ENCODE measurements at regions of chr6 and their contacts with region 1.

Region 1: DNA sequence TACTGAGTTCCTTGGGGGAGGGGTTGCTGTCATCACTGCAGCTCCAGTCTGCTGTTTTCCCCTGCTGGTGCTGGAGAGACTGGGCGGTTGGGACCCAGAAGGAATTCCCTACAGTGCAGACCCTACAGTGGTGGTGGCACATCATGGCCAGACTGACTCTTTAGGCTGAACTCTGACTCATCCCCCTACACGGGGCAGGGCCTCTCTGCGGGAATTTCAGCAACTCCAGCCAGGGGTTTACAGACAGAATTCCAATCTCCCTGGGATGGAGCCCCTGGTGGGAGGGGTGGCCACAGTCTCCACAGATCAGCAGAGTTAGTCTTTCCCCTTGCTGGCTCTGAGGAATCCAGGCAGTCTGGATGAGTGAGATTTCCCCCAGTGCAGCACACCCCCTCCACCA is 46.9 kb upstream of the MAPK13 start:
- DNase-seq: no peak
- H3K4me3 ChIP-seq: no peak overlapping the region
- H3K27ac ChIP-seq: no peak overlapping the region
- H3K4me1 ChIP-seq: no peaks in the 10 kb centered on the region
- H3K27me3 ChIP-seq: no peaks in the 10 kb centered on the region
- CTCF ChIP-seq: no peak
- EP300 ChIP-seq: no peak
- POLR2A ChIP-seq: no peak
- RAD21 ChIP-seq: no peak

Region 2: DNA sequence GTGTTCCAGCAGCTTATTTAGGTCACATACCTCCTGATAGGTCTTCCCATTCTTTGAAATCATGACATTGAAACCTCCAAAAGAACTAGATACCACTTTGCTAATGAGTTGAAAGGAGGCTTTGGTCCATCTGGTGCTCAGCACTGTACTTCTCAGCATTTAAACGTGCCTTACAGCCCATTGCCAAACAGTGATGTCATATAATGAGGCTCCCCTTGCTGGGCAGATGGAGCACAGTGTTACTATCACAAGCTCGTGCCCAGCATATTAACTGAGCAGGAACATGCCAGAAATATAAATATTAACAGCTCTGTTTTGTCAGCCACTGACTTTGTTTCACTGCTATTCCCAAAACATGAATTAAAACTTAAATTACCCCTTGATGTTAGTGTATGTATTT is 21.4 kb after region 1 on chr6:
- CTCF ChIA-PET with region 1: interaction called, 13 read pairs
- POLR2A ChIA-PET with region 1: no interaction called
- DNase-seq: no peak
- H3K4me3 ChIP-seq: no peak overlapping the region
- H3K27ac ChIP-seq: no peak overlapping the region
- H3K4me1 ChIP-seq: no peaks in the 10 kb centered on the region
- H3K27me3 ChIP-seq: no peaks in the 10 kb centered on the region
- CTCF ChIP-seq: no peak
- EP300 ChIP-seq: no peak
- POLR2A ChIP-seq: no peak
- RAD21 ChIP-seq: no peak

Region 3: DNA sequence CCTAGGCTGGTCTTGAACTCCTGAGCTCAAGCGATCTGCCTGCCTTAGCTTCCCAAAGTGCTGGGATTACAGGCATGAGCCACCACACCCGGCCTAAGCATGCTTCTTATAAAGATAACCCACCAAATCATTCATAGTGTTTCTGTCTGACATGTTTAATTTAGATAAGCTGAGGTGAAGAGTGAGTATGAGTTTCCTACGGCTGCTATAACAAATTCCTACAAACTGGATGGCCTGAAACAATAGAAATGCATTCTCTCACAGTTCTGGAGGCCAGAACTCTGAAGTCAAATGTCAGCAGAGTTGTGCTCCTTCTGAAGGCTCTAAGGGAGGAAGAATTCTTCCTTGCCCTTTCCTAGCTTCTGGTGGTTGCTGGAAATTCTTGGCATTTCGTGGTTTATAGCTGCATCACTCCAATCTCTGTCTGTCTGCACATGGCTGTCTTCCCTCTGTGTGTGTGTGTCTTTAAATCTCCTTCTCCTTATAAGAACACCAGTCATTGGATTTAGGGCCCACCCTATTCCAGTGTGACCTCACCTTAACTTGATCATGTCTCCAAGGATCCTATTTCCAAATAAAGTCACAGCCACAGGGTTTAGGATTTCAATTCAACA is 76.8 kb after region 1 on chr6:
- CTCF ChIA-PET with region 1: no interaction called
- POLR2A ChIA-PET with region 1: no interaction called
- DNase-seq: no peak
- H3K4me3 ChIP-seq: no peak overlapping the region
- H3K27ac ChIP-seq: no peak overlapping the region
- H3K4me1 ChIP-seq: no peaks in the 10 kb centered on the region
- H3K27me3 ChIP-seq: no peaks in the 10 kb centered on the region
- CTCF ChIP-seq: no peak
- EP300 ChIP-seq: no peak
- POLR2A ChIP-seq: no peak
- RAD21 ChIP-seq: no peak